ENCODE measurements at regions of chr17 and their contacts with region 1.

Region 1: DNA sequence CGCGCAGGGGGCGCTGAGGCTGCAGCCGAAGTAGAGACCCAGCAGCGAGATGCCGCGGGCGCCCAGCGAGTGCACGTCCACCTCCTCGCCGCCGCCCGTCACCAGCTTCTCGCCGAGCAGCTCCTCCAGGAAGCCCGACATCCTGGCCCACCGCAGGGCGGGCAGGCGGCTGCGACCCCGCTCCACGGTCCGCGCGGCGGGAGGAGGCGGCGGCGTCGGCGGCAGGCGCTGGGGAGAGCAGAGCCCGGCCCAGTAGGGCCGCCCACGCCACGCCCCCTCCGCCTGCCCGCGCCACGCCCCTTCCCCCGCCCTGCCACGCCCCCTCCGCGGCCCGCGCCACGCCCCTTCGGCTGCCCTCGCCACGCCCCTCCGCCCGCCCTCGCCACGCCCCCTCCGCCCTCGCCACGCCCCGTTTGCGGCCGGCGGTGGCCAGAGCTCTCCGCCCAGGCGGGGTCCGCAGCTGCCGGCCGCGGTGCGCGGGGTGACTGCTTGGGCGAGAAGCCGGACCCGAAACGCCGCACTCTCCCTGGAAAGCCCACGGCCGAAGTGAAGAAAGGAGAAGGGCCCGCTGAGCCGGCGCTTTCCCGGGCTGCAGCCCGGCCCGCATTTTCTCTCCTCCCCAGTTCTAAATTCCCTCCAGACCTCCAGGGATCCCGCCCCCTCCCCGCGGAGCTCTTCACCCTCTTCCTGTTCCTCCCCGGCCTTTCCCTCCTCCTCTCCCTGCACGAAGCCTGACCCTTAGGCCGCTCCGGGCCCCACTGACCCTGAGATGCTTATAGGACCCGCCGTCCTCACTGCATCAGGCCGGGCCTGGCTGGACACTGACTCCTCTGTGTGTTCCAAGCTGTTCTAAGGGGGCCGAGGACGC is at the start of gene NXN:
- DNase-seq: peak; percentile 90
- ATAC-seq: peak; percentile 89
- H3K4me3 Mint-ChIP-seq: peak within 1 kb of the TSS; percentile 69
- H3K27ac Mint-ChIP-seq: no peak within 1 kb of the TSS
- H3K4me1 Mint-ChIP-seq: peaks cover 16% of the 10 kb centered on the region
- H3K27me3 Mint-ChIP-seq: peaks cover 31% of the 10 kb centered on the region
- total RNA-seq, gene NXN: 0.68 to 0.97 TPM

Region 2: DNA sequence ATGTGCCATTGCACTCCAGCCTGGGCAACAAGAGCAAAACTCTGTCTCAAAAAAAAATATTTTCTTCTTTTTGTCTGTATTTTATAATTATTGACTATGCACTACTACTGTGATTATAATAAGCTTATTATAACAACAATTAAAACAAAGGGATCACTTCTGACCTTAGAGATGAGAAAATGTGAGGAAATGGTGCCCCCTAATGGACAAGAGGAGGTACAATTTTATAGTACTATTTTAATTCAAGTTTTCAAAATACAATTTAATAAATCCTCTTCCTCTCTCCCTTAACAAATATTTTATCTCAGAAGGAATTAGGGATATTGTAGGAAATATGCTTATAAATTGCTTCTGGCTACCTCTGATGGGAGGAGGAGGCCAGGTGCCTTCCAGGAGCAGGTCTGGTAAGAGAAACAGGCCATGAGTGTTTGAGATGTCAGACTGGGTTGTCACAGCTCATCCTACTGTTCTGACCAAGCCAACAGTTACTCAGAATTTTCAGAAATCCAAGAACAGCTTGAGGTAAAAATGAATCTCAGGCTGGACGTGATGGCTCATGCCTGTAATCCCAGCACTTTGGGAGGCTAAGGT is 279.2 kb before region 1 on chr17:
- CTCF ChIA-PET with region 1: interaction called, 12 read pairs
- POLR2A ChIA-PET with region 1: no interaction called
- DNase-seq: no peak
- ATAC-seq: peak; percentile 55
- H3K4me3 Mint-ChIP-seq: no peak overlapping the region
- H3K27ac Mint-ChIP-seq: no peak overlapping the region
- H3K4me1 Mint-ChIP-seq: no peaks in the 10 kb centered on the region
- H3K27me3 Mint-ChIP-seq: no peaks in the 10 kb centered on the region

Region 3: GRCh38 chr17:781805-782731 is 197.7 kb before region 1 on chr17 and contains the starts of genes GLOD4 and MRM3:
- CTCF ChIA-PET with region 1: interaction called, 42 read pairs
- POLR2A ChIA-PET with region 1: interaction called, 14 read pairs
- DNase-seq: peak; percentile 94
- ATAC-seq: peak; percentile 94
- H3K4me3 Mint-ChIP-seq: peak within 1 kb of the TSS; percentile 96
- H3K27ac Mint-ChIP-seq: peak within 1 kb of the TSS; percentile 96
- H3K4me1 Mint-ChIP-seq: peaks cover 32% of the 10 kb centered on the region
- H3K27me3 Mint-ChIP-seq: no peaks in the 10 kb centered on the region
- total RNA-seq, gene GLOD4: 57.5 to 59.1 TPM
- total RNA-seq, gene MRM3: 19.4 to 19.6 TPM

Region 4: GRCh38 chr17:794876-795275 is 184.9 kb before region 1 on chr17:
- CTCF ChIA-PET with region 1: interaction called, 90 read pairs
- POLR2A ChIA-PET with region 1: no interaction called
- DNase-seq: peak; percentile 62
- ATAC-seq: peak; percentile 74
- H3K4me3 Mint-ChIP-seq: no peak overlapping the region
- H3K27ac Mint-ChIP-seq: no peak overlapping the region
- H3K4me1 Mint-ChIP-seq: peaks cover 7% of the 10 kb centered on the region
- H3K27me3 Mint-ChIP-seq: no peaks in the 10 kb centered on the region

Region 5: DNA sequence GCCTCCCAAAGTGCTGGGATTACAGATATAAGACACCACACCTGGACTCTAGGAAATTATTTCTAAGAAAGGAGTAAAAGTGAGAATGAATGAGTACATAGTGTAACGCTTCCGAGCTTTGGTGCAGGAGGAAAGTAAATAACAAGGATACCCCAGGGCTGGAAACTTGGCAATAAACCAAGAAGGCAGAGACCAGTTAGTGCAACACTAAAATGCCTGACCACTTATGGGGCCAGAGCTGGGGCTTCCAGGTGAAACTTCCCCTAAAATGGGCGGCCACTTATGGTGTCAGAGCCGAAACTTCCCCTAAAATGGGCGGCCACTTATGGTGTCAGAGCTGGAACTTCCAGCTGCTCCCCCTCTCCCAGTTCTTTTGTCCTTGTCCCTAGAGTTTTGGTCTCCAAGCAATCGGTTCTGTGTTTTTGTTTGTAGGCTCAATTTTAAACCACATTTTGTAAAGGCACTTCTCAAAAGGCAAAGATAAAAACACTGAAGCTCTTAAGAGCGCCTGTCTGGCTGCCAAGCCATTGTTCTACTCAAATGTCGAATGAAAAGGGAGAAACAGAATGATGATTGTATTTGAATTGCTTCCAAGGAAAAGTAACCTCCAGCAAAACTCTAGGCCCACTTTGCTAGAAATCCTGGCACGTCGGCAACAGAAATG is 64.1 kb before region 1 on chr17:
- CTCF ChIA-PET with region 1: no interaction called
- POLR2A ChIA-PET with region 1: no interaction called
- DNase-seq: no peak
- ATAC-seq: no peak
- H3K4me3 Mint-ChIP-seq: no peak overlapping the region
- H3K27ac Mint-ChIP-seq: no peak overlapping the region
- H3K4me1 Mint-ChIP-seq: no peaks in the 10 kb centered on the region
- H3K27me3 Mint-ChIP-seq: peaks cover 9% of the 10 kb centered on the region

Region 6: GRCh38 chr17:996554-997344 is 17.0 kb after region 1 on chr17 and contains the start of gene TIMM22:
- CTCF ChIA-PET with region 1: interaction called, 47 read pairs
- POLR2A ChIA-PET with region 1: interaction called, 3 read pairs
- DNase-seq: peak; percentile 95
- ATAC-seq: peak; percentile 98
- H3K4me3 Mint-ChIP-seq: peak within 1 kb of the TSS; percentile 89
- H3K27ac Mint-ChIP-seq: peak within 1 kb of the TSS; percentile 95
- H3K4me1 Mint-ChIP-seq: peaks cover 23% of the 10 kb centered on the region
- H3K27me3 Mint-ChIP-seq: no peaks in the 10 kb centered on the region
- total RNA-seq, gene TIMM22: 10.0 to 10.4 TPM